Right lobe of liver (tissue), 6 donors: ENCODE measurements at regions of chr2 and their contacts with region 1.

Region 1: GRCh38 chr2:72150157-72150865 is 2.6 kb upstream of the CYP26B1 start:
- DNase-seq: peak; percentile 69 to 81 (median 69)
- ATAC-seq: peak; percentile 91 to 93 (median 92)
- H3K4me3 ChIP-seq: peak overlapping the region in 2 of 3 donors; percentile 13 to 20
- H3K27ac ChIP-seq: no peak overlapping the region
- H3K4me1 ChIP-seq: peaks cover 0 to 31% (median 3%) of the 10 kb centered on the region in 4 donors
- H3K27me3 ChIP-seq: peaks cover 0 to 29% of the 10 kb centered on the region in 2 donors
- CTCF ChIP-seq: peak; percentile 74 to 91 (median 78)
- POLR2A ChIP-seq: no peak

Region 2: DNA sequence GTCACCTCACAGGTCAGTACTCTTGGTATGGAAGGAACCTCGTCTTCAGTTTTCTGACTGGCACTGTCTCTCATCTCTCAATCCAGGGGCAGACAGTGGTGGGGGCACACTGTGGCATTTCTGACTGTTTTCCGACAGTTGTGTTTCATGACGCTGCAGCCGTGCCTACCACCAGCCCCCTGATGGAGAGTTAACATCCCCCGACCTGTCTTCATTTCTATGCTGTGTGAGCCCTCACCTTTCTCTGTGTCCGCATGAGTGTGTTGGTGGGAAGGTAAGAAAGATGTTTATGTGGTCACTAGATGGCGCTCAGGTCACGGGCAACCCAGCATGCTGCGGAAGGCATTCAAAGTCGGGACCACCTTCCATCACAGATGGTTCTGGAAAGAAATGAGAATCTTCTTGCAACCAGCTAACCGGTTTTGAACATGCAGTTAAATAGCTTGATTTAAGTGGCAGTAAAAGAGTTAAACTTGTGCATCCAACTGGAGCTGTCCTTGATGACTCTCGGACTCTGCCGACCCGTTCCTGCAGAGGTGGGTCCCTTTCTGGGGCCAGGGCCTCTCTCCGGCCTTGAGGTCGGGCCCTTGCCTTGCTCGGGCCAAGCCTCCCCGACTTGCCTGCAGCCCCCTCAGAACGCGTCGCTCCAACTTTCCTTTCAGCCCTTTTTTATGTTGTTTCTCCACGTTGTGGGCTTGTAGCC is 604.6 kb before region 1 on chr2:
- intact Hi-C with region 1: loop called in 1 of 2 experiments (anchors 10 kb)
- DNase-seq: peak in 1 of 3 donors; percentile 12
- ATAC-seq: peak; percentile 64 to 71 (median 69)
- H3K4me3 ChIP-seq: no peak overlapping the region
- H3K27ac ChIP-seq: no peak overlapping the region
- H3K4me1 ChIP-seq: no peaks in the 10 kb centered on the region
- H3K27me3 ChIP-seq: no peaks in the 10 kb centered on the region
- CTCF ChIP-seq: peak; percentile 64 to 68 (median 64)
- POLR2A ChIP-seq: no peak

Region 3: DNA sequence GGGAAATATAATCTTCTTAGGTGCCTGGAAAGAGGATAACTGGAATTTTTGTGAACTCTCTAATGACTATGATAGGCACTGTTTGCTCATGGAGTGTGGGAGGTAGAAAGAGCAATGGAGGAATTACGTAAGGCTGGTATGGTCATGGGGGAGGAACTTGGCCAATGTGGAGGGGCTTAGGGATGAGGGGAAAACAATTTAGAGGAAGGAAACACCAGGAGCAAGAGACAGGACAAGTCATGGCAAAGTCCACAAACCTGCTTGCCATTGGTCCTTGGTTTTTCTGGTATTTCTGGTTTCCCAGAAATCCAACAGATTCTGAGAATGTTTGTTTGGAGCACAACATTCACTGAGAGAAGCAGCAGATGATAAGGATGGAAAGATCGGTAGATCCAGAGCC is 422.7 kb before region 1 on chr2:
- intact Hi-C with region 1: no loop called
- DNase-seq: no peak
- ATAC-seq: no peak
- H3K4me3 ChIP-seq: no peak overlapping the region
- H3K27ac ChIP-seq: no peak overlapping the region
- H3K4me1 ChIP-seq: no peaks in the 10 kb centered on the region
- H3K27me3 ChIP-seq: no peaks in the 10 kb centered on the region
- CTCF ChIP-seq: no peak
- POLR2A ChIP-seq: no peak

Region 4: GRCh38 chr2:71798266-71799012 is 351.9 kb before region 1 on chr2:
- intact Hi-C with region 1: loop called in 1 of 2 experiments (anchors 10 kb)
- DNase-seq: peak; percentile 59 to 75 (median 72)
- ATAC-seq: peak; percentile 91 to 96 (median 94)
- H3K4me3 ChIP-seq: no peak overlapping the region
- H3K27ac ChIP-seq: no peak overlapping the region
- H3K4me1 ChIP-seq: no peaks in the 10 kb centered on the region
- H3K27me3 ChIP-seq: no peaks in the 10 kb centered on the region
- CTCF ChIP-seq: peak; percentile 80 to 86 (median 86)
- POLR2A ChIP-seq: no peak

Region 5: GRCh38 chr2:71813807-71814470 is 336.4 kb before region 1 on chr2:
- intact Hi-C with region 1: loop called (anchors 10 kb)
- DNase-seq: no peak
- ATAC-seq: no peak
- H3K4me3 ChIP-seq: no peak overlapping the region
- H3K27ac ChIP-seq: no peak overlapping the region
- H3K4me1 ChIP-seq: no peaks in the 10 kb centered on the region
- H3K27me3 ChIP-seq: no peaks in the 10 kb centered on the region
- CTCF ChIP-seq: no peak
- POLR2A ChIP-seq: no peak

Region 6: GRCh38 chr2:71882949-71883472 is 267.3 kb before region 1 on chr2:
- intact Hi-C with region 1: no loop called
- DNase-seq: peak; percentile 95 to 97 (median 96)
- ATAC-seq: peak; percentile 88 to 96 (median 94)
- H3K4me3 ChIP-seq: no peak overlapping the region
- H3K27ac ChIP-seq: no peak overlapping the region
- H3K4me1 ChIP-seq: peaks cover 0 to 14% (median 6%) of the 10 kb centered on the region in 4 donors
- H3K27me3 ChIP-seq: no peaks in the 10 kb centered on the region
- CTCF ChIP-seq: no peak
- POLR2A ChIP-seq: peak; percentile 53

Region 7: DNA sequence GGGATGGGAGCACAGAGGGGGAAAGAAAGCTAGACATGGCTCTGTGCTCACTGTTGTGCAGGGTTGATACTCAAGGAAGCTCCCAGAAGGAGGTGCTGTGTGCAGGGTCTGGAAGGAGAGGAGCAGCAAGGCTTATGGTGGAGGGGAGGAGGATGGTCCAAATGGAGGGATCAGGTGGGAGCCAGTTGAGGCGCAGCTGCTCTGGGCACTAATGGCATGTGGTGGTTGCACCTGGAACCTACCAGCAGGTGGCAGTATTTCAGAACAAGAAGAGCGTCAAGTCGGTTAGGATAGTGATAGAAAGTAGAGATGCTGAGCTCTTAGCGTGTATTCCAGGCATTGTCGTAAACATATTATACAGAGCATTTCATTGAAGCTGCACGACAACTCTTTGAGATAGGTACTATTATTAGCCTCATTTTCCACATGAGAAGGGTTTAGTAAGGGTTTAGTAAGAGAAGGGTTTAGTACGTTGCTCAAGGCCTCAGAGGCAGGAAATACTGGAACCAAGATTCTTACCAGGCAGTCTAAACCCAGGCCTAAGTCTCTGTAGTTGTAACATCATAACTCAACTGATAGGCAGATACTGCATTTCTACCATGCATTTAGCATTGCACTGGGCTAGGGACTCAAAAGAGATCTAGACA is 226.3 kb before region 1 on chr2:
- intact Hi-C with region 1: loop called (anchors 5 kb)
- DNase-seq: peak in 2 of 3 donors; percentile 59 to 73
- ATAC-seq: peak; percentile 85 to 97 (median 93)
- H3K4me3 ChIP-seq: no peak overlapping the region
- H3K27ac ChIP-seq: no peak overlapping the region
- H3K4me1 ChIP-seq: no peaks in the 10 kb centered on the region
- H3K27me3 ChIP-seq: no peaks in the 10 kb centered on the region
- CTCF ChIP-seq: peak; percentile 87 to 94 (median 90)
- POLR2A ChIP-seq: no peak

Region 8: DNA sequence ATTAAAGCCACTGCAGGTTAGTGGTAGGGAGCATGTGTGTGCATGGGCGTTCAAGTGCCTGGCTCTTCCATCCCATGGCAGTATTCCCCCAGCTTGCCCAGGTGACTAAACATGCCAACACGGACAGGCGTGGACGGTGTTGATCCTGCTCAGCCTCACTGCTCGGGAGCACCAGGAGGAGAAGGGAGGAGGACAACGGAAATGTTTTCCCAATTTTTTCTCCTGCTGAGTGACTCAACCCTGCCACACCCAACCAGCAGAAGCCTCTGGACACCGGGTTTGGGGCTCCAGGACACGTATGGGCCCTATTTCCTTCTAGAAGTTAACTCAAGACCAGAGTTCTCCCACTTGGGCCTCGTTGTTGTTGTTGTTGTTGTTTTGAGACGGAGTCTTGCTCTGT is 141.7 kb before region 1 on chr2:
- intact Hi-C with region 1: no loop called
- DNase-seq: no peak
- ATAC-seq: no peak
- H3K4me3 ChIP-seq: no peak overlapping the region
- H3K27ac ChIP-seq: no peak overlapping the region
- H3K4me1 ChIP-seq: no peaks in the 10 kb centered on the region
- H3K27me3 ChIP-seq: no peaks in the 10 kb centered on the region
- CTCF ChIP-seq: no peak
- POLR2A ChIP-seq: no peak